Breast epithelium (tissue), 4 donors: ENCODE measurements at regions of chr4 and their contacts with region 1.

Region 1: DNA sequence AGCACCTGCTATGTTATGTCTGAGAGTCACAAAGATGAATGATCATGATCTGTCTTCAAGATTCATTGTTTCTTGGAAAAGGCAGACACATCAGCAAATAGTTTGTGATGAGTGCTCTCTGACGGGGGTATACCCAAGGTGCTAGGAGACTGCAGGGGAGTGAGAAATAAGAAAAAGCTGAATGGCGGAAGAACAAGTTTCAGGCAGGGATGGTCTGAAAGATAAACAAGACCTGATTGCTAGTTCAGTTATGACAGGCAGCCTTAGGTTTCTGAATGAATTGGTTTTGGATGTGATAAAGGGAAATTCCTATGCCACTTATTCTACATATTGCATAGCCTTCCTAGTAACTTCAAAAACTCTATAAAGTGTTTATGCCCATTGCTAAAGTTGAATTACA is 327.0 kb upstream of the DKK2 start:
- DNase-seq: no peak
- H3K4me3 ChIP-seq: no peak overlapping the region
- H3K27ac ChIP-seq: no peak overlapping the region
- H3K4me1 ChIP-seq: no peaks in the 10 kb centered on the region
- H3K27me3 ChIP-seq: no peaks in the 10 kb centered on the region
- CTCF ChIP-seq: no peak
- POLR2A ChIP-seq: no peak

Region 2: DNA sequence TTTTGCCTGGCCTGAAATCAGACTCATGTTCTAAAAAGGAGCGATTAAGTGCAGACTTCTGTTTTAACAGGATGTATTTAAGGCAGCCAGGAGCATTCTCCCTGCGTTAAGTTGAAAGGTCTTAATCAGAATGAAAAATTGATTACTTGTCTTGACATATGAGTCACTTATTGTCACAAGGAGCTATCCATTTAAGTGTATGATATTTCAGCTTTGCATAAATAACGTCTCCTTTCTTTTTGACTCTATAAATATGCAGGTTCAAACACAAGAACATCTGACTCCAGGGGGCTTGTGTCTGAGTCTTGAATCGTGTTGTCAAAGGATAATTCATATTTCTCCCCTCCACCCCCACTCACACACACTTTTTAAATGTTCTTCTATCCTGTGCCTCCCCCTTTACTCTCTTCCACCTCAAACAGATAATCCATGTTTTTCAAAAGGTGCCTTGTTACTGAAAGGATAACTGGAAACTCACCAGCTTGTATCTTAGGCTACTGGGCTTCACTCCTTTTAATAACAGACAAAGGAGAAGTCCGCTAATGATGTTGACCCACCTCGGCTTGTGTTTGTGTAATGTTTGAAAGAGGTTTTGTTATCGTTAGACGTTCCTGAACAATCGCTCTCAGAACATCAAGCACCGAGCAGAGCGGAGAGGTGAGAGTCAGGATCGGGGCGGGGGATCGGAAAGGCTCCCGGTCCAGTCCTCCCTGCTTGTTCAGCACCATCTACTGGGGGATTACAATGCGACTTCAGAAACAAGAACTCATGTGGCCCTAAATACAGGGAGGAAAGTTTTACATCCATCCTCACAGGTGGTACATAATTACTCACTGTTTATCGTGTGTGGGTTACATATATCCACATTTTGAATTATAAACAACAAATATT is 1149.7 kb after region 1 on chr4:
- intact Hi-C with region 1: loop called (anchors 5 kb)
- DNase-seq: peak in 1 of 2 donors; percentile 18
- H3K4me3 ChIP-seq: peak overlapping the region in 1 of 3 donors; percentile 1
- H3K27ac ChIP-seq: no peak overlapping the region
- H3K4me1 ChIP-seq: no peaks in the 10 kb centered on the region
- H3K27me3 ChIP-seq: peaks cover 0 to 12% of the 10 kb centered on the region in 2 donors
- CTCF ChIP-seq: peak in 2 of 3 donors; percentile 15 to 34
- POLR2A ChIP-seq: no peak